Naive thymus-derived CD4-positive, alpha-beta T cell (primary cell): ENCODE measurements at regions of chr5 and their contacts with region 1.

Region 1: GRCh38 chr5:81708889-81709288 is 42.0 kb downstream of the SSBP2 start:
- DNase-seq: no peak
- ATAC-seq: no peak
- H3K4me3 ChIP-seq: no peak overlapping the region
- H3K4me3 Mint-ChIP-seq: peak overlapping the region in 1 of 10 donors; percentile 5
- H3K27ac ChIP-seq: no peak overlapping the region
- H3K27ac Mint-ChIP-seq: peak overlapping the region in 2 of 9 donors; percentile 23 to 38
- H3K4me1 ChIP-seq: no peaks in the 10 kb centered on the region
- H3K4me1 Mint-ChIP-seq: peaks cover 2 to 69% (median 54%) of the 10 kb centered on the region in 7 donors
- H3K27me3 ChIP-seq: no peaks in the 10 kb centered on the region
- H3K27me3 Mint-ChIP-seq: no peaks in the 10 kb centered on the region

Region 2: GRCh38 chr5:81696418-81697397 is 12.2 kb before region 1 on chr5:
- CTCF ChIA-PET with region 1: no interaction called
- POLR2A ChIA-PET with region 1: no interaction called
- intact Hi-C with region 1: loop called in 1 of 2 experiments (anchors 2 kb)
- DNase-seq: no peak
- ATAC-seq: no peak
- H3K4me3 ChIP-seq: no peak overlapping the region
- H3K4me3 Mint-ChIP-seq: no peak overlapping the region
- H3K27ac ChIP-seq: no peak overlapping the region
- H3K27ac Mint-ChIP-seq: peak overlapping the region in 3 of 9 donors; percentile 6 to 52 (median 20)
- H3K4me1 ChIP-seq: no peaks in the 10 kb centered on the region
- H3K4me1 Mint-ChIP-seq: peaks cover 5 to 72% (median 45%) of the 10 kb centered on the region in 7 donors
- H3K27me3 ChIP-seq: no peaks in the 10 kb centered on the region
- H3K27me3 Mint-ChIP-seq: no peaks in the 10 kb centered on the region